Activated B cell treated with CpG ODN at 0.5 μM for 24 hours (primary cell): ENCODE measurements at regions of chr1 and their contacts with region 1.

Region 1: DNA sequence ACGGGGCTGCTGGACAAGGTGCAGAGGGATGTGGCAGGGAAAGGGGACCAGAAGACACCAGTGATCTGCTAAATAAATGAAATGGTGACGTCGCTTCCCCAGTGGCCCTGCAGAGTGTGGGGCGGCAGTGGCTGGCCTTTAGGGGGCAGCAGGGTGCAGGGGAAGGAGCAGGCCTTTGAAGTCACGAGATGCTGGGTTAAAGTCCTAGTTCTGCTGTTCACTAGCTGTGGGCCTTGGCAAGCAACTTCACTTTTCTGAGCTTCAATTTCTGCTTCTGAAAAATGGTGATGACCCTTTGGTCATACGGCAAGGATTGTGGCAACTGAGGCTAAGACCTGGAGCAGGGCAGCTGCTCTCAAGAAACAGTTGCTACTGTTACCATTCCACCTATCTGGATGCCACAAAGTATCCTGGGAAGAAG is 9.2 kb upstream of the GALE start:
- DNase-seq: peak; percentile 69
- ATAC-seq: peak; percentile 89
- H3K4me3 Mint-ChIP-seq: no peak overlapping the region
- H3K27ac Mint-ChIP-seq: peak overlapping the region; percentile 74
- H3K4me1 Mint-ChIP-seq: peaks cover 25% of the 10 kb centered on the region
- H3K27me3 Mint-ChIP-seq: no peaks in the 10 kb centered on the region
- CTCF ChIP-seq: no peak

Region 2: GRCh38 chr1:22171966-22172670 is 1637.6 kb before region 1 on chr1:
- CTCF ChIA-PET with region 1: no interaction called
- POLR2A ChIA-PET with region 1: no interaction called
- intact Hi-C with region 1: no loop called
- DNase-seq: no peak
- ATAC-seq: no peak
- H3K4me3 Mint-ChIP-seq: no peak overlapping the region
- H3K27ac Mint-ChIP-seq: no peak overlapping the region
- H3K4me1 Mint-ChIP-seq: peaks cover 29% of the 10 kb centered on the region
- H3K27me3 Mint-ChIP-seq: no peaks in the 10 kb centered on the region
- CTCF ChIP-seq: no peak

Region 3: GRCh38 chr1:23577056-23578004 is 232.4 kb before region 1 on chr1:
- CTCF ChIA-PET with region 1: no interaction called
- POLR2A ChIA-PET with region 1: no interaction called
- intact Hi-C with region 1: no loop called
- DNase-seq: no peak
- ATAC-seq: peak; percentile 75
- H3K4me3 Mint-ChIP-seq: peak overlapping the region; percentile 74
- H3K27ac Mint-ChIP-seq: peak overlapping the region; percentile 87
- H3K4me1 Mint-ChIP-seq: peaks cover 86% of the 10 kb centered on the region
- H3K27me3 Mint-ChIP-seq: no peaks in the 10 kb centered on the region
- CTCF ChIP-seq: no peak

Region 4: DNA sequence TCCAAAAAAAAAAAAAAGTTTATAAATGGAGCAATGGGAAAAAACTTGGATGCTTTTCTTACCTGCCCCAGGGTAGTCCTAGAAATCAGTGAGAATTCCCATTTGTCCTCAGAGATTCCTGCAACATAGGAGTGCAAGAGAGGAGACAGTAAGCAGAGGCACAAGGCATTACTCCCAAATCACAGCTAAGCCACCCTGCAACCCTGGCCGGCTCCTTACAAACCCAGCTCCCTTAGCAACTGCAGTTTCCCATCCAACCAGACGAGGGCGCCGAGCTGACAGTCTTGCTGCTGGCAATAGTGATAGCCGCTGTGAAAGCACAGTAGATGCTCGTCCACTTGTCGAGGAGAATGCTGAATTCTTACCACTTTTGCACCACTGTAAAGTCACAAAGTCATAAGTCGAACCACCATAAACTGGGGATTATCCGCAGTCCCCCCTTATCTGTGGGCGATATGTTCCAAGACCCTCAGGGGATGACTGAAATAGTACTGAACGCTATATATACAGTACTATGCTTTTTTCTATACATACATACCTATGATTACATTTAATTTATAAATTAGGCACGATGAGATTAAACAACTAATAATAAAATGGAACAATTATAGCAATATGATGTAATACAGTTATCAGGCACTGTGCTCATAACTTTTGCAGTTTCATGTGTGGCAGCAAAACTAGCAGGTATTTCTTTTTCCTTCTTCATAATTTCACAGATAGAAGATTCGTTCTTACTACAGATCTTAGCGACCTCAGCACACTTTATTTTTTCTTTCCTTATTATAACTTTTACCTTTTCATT is 37.5 kb before region 1 on chr1:
- CTCF ChIA-PET with region 1: interaction called, 21 read pairs
- POLR2A ChIA-PET with region 1: no interaction called
- intact Hi-C with region 1: loop called (anchors 1 kb)
- DNase-seq: peak; percentile 76
- ATAC-seq: peak; percentile 100
- H3K4me3 Mint-ChIP-seq: no peak overlapping the region
- H3K27ac Mint-ChIP-seq: no peak overlapping the region
- H3K4me1 Mint-ChIP-seq: peaks cover 10% of the 10 kb centered on the region
- H3K27me3 Mint-ChIP-seq: no peaks in the 10 kb centered on the region
- CTCF ChIP-seq: peak; percentile 68

Region 5: GRCh38 chr1:23825076-23825761 is 15.5 kb after region 1 on chr1 and contains the start of gene HMGCL:
- CTCF ChIA-PET with region 1: interaction called, 36 read pairs
- POLR2A ChIA-PET with region 1: interaction called, 44 read pairs
- intact Hi-C with region 1: loop called (anchors 1 kb)
- DNase-seq: peak; percentile 81
- ATAC-seq: peak; percentile 95
- H3K4me3 Mint-ChIP-seq: peak within 1 kb of the TSS; percentile 96
- H3K27ac Mint-ChIP-seq: peak within 1 kb of the TSS; percentile 95
- H3K4me1 Mint-ChIP-seq: peaks cover 20% of the 10 kb centered on the region
- H3K27me3 Mint-ChIP-seq: no peaks in the 10 kb centered on the region
- CTCF ChIP-seq: no peak
- total RNA-seq, gene HMGCL: 21.0 and 30.7 TPM in 2 replicates

Region 6: DNA sequence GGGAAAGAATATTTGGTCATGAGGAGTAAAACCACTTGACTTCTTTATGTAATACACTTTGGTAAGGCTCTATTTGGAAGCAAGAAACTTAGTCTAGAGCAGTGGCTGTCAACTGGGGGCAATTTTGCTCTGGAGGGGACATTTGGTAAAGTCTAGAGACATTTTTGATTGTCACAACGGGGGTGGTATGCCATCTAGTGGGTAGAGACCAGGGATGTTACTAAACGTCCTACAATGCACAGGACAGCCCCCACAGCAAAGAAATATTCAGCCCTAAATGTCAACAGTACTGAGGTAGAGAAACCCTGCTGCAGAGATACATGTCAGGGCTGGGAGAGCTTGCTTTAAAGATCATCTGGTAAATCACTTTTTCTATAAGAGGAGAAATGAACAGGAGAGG is 44.8 kb after region 1 on chr1:
- CTCF ChIA-PET with region 1: interaction called, 12 read pairs
- POLR2A ChIA-PET with region 1: no interaction called
- intact Hi-C with region 1: no loop called
- DNase-seq: no peak
- ATAC-seq: no peak
- H3K4me3 Mint-ChIP-seq: no peak overlapping the region
- H3K27ac Mint-ChIP-seq: no peak overlapping the region
- H3K4me1 Mint-ChIP-seq: no peaks in the 10 kb centered on the region
- H3K27me3 Mint-ChIP-seq: no peaks in the 10 kb centered on the region
- CTCF ChIP-seq: no peak

Region 7: DNA sequence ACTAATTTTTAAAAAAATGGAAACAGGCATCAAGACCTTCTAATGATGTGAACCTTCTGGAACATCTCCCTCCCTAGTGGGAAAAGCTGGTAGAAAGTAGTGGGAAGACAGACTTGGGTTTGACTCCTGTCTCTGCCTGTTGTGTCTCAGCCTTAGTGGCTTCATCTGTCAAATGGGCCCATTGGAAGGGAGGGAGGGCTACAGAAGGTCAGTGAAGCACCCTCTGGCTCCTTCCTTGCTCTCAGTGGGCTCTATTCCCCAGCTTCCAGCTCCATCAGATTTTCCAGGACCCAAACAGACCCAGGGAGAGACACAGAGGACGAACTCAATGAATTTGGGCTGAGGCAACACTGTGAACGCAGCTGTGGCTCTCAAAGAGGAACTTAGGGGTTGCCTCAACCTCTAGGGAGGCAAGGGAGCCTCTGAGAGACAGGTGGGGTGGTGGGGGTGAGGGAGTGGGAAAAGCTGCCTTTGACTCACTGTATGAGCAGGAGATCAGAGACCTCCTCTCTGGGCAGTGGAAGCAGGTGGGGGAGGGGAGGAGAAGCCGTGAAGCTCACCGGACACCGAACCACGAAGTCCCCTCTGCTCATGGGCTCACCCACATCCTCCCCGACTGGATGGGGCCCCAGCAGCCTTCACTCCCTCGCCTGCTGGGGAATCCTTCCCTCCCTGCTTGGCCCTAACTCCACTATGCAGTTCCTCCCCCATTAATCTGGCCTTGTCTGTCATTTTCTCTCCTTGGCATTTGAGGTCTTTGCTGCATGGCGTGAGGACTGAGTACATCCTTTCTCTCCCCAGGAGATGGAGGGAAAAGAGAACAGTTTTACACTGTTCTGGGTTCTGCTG is 99.0 kb after region 1 on chr1:
- CTCF ChIA-PET with region 1: interaction called, 188 read pairs
- POLR2A ChIA-PET with region 1: interaction called, 24 read pairs
- intact Hi-C with region 1: no loop called
- DNase-seq: peak; percentile 59
- ATAC-seq: peak; percentile 63
- H3K4me3 Mint-ChIP-seq: peak overlapping the region; percentile 98
- H3K27ac Mint-ChIP-seq: peak overlapping the region; percentile 99
- H3K4me1 Mint-ChIP-seq: peaks cover 94% of the 10 kb centered on the region
- H3K27me3 Mint-ChIP-seq: no peaks in the 10 kb centered on the region
- CTCF ChIP-seq: no peak

Region 8: DNA sequence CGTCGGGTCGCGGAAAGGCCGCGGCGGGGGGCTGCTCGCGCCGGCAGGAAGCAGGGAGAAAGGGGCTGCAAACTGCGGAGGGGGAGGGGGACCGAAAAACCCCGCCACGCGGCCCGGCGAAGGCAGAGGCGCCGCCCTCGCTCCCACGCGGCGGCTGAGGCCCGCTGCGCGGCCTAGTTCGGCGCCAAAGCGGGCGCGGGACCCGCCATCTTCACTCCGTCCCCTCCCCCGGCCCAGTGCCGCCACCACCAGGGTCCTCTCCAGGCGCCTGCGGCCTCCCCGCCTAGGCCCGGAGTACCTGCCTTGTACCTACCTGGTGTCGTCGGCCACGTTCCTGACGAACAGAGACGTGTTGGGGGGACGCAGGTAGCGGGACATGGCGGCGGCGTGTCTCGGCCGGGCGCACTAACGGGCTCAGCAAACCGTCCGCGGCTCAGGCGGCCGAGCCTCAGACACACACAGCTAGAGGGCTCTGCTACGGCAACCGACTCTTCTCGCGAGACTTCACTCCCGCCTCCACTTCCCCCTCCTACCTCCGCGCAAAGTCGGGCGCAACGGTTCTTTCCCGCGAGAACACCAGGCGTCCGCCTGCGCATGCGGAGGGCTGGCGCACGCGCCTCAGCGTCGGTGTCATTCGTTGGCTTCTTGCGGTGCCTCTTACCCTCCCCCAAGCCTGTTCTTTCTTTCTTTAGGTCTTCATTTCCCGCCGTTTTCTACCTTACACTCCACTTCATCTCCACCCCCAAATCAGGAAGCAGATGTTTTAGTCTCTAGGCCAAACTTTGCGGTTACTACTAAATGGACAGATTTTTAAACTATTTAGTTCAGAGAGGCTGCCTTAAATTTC is 170.3 kb after region 1 on chr1 and contains the start of gene SRSF10:
- CTCF ChIA-PET with region 1: no interaction called
- POLR2A ChIA-PET with region 1: interaction called, 3 read pairs
- intact Hi-C with region 1: loop called (anchors 1 kb)
- DNase-seq: peak; percentile 92
- ATAC-seq: peak; percentile 96
- H3K4me3 Mint-ChIP-seq: peak within 1 kb of the TSS; percentile 96
- H3K27ac Mint-ChIP-seq: peak within 1 kb of the TSS; percentile 95
- H3K4me1 Mint-ChIP-seq: peaks cover 54% of the 10 kb centered on the region
- H3K27me3 Mint-ChIP-seq: no peaks in the 10 kb centered on the region
- CTCF ChIP-seq: no peak
- total RNA-seq, gene SRSF10: 168 and 192 TPM in 2 replicates